IMR-90 (cell line): ENCODE measurements at regions of chr5 and their contacts with region 1.

Region 1: GRCh38 chr5:133025804-133026663 is at the start of gene ZCCHC10:
- DNase-seq: peak; percentile 89
- ATAC-seq: peak; percentile 99
- H3K4me3 ChIP-seq: peak within 1 kb of the TSS; percentile 94
- H3K27ac ChIP-seq: peak within 1 kb of the TSS; percentile 88
- H3K4me1 ChIP-seq: no peaks in the 10 kb centered on the region
- H3K27me3 ChIP-seq: no peaks in the 10 kb centered on the region
- CTCF ChIP-seq: no peak
- POLR2A ChIP-seq: peak; percentile 95
- RAD21 ChIP-seq: no peak; the same call in 1 of the 2 replicates
- total RNA-seq, gene ZCCHC10: 4.1 and 7.2 TPM in 2 replicates

Region 2: GRCh38 chr5:133051580-133052332 is 25.7 kb after region 1 on chr5 and contains the start of gene HSPA4:
- CTCF ChIA-PET with region 1: no interaction called
- POLR2A ChIA-PET with region 1: no interaction called
- dilution Hi-C with region 1: no loop called
- in situ Hi-C with region 1: no loop called
- intact Hi-C with region 1: loop called (anchors 2 kb)
- DNase-seq: peak; percentile 99
- ATAC-seq: peak; percentile 89
- H3K4me3 ChIP-seq: peak within 1 kb of the TSS; percentile 51
- H3K27ac ChIP-seq: peak within 1 kb of the TSS; percentile 93
- H3K4me1 ChIP-seq: peaks cover 5% of the 10 kb centered on the region
- H3K27me3 ChIP-seq: no peaks in the 10 kb centered on the region
- CTCF ChIP-seq: no peak
- POLR2A ChIP-seq: peak; percentile 97
- RAD21 ChIP-seq: no peak; the same call in 1 of the 2 replicates
- total RNA-seq, gene HSPA4: 120 and 192 TPM in 2 replicates

Region 3: GRCh38 chr5:133130387-133131118 is 104.5 kb after region 1 on chr5:
- CTCF ChIA-PET with region 1: no interaction called
- POLR2A ChIA-PET with region 1: no interaction called
- dilution Hi-C with region 1: no loop called
- in situ Hi-C with region 1: no loop called
- intact Hi-C with region 1: no loop called
- DNase-seq: no peak
- ATAC-seq: no peak
- H3K4me3 ChIP-seq: no peak overlapping the region
- H3K27ac ChIP-seq: no peak overlapping the region
- H3K4me1 ChIP-seq: no peaks in the 10 kb centered on the region
- H3K27me3 ChIP-seq: peaks cover 20% of the 10 kb centered on the region; the same call in 1 of the 2 replicates
- CTCF ChIP-seq: no peak
- POLR2A ChIP-seq: no peak
- RAD21 ChIP-seq: no peak

Region 4: DNA sequence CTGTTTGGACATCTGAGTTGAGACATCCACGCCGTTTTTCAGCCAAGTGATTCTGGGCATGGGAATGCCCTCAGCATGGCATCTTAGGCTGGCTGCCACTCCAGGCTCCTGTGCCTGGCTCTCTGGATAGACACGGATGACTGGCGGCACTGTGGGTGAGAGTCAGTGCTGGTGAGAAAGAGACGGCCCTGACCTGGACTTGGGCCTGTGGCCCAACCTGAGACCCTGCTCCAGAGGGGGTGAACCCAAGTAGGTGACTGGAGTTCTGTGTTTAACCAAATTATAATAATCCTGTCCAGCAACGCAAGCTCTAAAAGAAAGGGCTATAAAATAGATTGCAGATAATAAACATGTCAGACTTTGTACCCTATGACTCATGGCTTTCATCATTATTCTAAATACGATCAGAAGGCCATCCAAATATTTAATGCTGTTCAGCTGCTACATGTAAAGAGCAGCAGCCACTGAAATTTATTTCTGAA is 199.7 kb after region 1 on chr5:
- CTCF ChIA-PET with region 1: no interaction called
- POLR2A ChIA-PET with region 1: no interaction called
- dilution Hi-C with region 1: no loop called
- in situ Hi-C with region 1: no loop called
- intact Hi-C with region 1: no loop called
- DNase-seq: peak; percentile 70
- ATAC-seq: peak; percentile 54
- H3K4me3 ChIP-seq: no peak overlapping the region
- H3K27ac ChIP-seq: peak overlapping the region; percentile 63; the same call in 1 of the 2 replicates
- H3K4me1 ChIP-seq: peaks cover 24% of the 10 kb centered on the region
- H3K27me3 ChIP-seq: no peaks in the 10 kb centered on the region
- CTCF ChIP-seq: no peak
- POLR2A ChIP-seq: no peak
- RAD21 ChIP-seq: no peak